Lower leg skin (tissue), 4 donors: ENCODE measurements at regions of chr10 and their contacts with region 1.

Region 1: DNA sequence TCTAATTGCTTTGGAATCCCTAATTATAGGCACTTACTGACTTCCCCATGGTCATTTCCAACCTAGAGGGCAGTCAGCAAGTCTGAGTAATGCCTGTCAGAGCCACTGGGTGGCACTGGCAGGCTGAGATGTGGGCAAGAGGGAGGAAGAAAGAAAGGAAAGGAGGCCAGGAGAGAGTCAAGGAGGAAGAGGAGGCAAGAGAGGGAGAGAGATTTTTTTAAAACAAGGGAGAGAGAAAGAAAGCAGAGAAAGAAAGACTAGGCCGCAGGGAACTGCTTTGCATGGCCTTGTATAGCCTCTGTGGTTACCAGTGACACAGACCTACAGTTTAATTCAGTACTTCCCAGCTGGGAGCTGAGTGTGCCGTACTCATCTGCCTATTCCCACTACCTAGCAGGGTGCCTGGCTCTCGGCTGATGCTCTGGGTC is 210.4 kb upstream of the ADO start:
- DNase-seq: peak in 1 of 2 donors; percentile 36
- H3K4me3 ChIP-seq: no peak overlapping the region
- CTCF ChIP-seq: peak in 1 of 3 donors; percentile 91
- POLR2A ChIP-seq: no peak

Region 2: GRCh38 chr10:61565819-61566560 is 1028.1 kb before region 1 on chr10:
- intact Hi-C with region 1: no loop called
- DNase-seq: no peak
- H3K4me3 ChIP-seq: no peak overlapping the region
- CTCF ChIP-seq: no peak
- POLR2A ChIP-seq: no peak

Region 3: GRCh38 chr10:62816331-62817120 is 222.4 kb after region 1 on chr10 and contains the start of gene EGR2:
- intact Hi-C with region 1: loop called (anchors 5 kb)
- DNase-seq: peak; percentile 93 to 98
- H3K4me3 ChIP-seq: peak within 1 kb of the TSS; percentile 41
- CTCF ChIP-seq: no peak
- POLR2A ChIP-seq: no peak
- total RNA-seq, gene EGR2: 9.7 to 23.8 (median 18.1) TPM

Region 4: DNA sequence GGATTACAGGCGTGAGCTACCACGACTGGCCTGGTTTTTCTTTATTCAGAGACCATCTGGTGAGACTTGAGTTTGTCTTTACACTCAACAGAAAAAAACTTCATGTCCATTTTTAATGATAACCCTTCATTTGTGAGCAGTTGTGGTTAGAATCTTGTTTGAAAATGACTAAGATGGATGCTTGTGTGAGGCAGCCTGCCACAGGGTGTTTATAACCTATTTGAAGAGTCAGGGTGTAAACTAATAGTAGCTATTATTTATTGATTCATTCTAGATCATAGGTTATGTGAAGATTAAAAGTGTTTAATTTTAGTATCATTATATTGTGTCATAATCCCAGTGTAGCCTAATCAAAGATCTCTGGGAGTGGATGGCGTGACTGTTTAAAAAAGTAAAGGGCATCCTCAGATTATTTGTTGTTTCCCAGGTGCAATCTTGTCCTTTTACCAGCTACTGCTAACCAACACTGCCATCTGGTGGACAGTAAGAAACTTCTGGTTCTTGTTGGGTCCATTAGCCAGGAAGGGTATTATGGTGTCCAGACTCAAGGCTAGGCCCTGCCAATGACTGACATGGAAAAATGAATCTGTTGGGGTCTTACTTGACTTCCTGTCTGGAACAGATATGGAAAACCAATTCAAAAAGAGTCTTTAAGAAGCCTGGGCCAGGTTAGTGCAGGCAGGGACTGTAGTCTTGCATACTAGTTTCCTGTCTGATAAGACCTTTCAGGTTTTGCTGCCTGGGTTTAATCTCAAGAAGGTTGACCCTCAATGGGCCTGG is 563.9 kb after region 1 on chr10:
- intact Hi-C with region 1: loop called (anchors 10 kb)
- DNase-seq: no peak
- H3K4me3 ChIP-seq: no peak overlapping the region
- CTCF ChIP-seq: peak in 1 of 3 donors; percentile 29
- POLR2A ChIP-seq: no peak